Right ventricle myocardium inferior (tissue), 1 donor: ENCODE measurements at regions of chr11 and their contacts with region 1.

Region 1: GRCh38 chr11:108467091-108467823 is at the start of gene C11orf65:
- DNase-seq: peak; percentile 98
- ATAC-seq: peak; percentile 100
- total RNA-seq, gene C11orf65: 0.43 TPM

Region 2: GRCh38 chr11:108121274-108122155 is 345.7 kb before region 1 on chr11 and contains the start of gene ACAT1:
- intact Hi-C with region 1: loop called (anchors 5 kb)
- DNase-seq: peak; percentile 100
- ATAC-seq: peak; percentile 95
- total RNA-seq, gene ACAT1: 396 TPM

Region 3: DNA sequence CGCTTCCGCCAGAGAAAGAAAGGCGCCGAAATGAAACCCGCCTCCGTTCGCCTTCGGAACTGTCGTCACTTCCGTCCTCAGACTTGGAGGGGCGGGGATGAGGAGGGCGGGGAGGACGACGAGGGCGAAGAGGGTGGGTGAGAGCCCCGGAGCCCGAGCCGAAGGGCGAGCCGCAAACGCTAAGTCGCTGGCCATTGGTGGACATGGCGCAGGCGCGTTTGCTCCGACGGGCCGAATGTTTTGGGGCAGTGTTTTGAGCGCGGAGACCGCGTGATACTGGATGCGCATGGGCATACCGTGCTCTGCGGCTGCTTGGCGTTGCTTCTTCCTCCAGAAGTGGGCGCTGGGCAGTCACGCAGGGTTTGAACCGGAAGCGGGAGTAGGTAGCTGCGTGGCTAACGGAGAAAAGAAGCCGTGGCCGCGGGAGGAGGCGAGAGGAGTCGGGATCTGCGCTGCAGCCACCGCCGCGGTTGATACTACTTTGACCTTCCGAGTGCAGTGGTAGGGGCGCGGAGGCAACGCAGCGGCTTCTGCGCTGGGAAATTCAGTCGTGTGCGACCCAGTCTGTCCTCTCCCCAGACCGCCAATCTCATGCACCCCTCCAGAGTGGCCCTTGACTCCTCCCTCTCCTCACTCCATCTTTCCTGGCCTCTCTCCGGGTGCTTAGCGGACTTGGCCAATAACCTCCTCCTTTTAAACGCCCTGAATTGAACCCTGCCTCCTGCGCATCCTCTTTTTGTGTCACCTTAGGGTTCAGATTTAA is 244.4 kb before region 1 on chr11 and contains the start of gene ATM:
- intact Hi-C with region 1: loop called (anchors 2 kb)
- DNase-seq: peak; percentile 100
- ATAC-seq: peak; percentile 98
- total RNA-seq, gene ATM: 24.9 TPM

Region 4: GRCh38 chr11:108497317-108498045 is 30.2 kb after region 1 on chr11:
- intact Hi-C with region 1: loop called (anchors 1 kb)
- DNase-seq: peak; percentile 89
- ATAC-seq: peak; percentile 95

Region 5: GRCh38 chr11:108593214-108593922 is 126.1 kb after region 1 on chr11 and contains the start of gene EXPH5:
- intact Hi-C with region 1: loop called (anchors 5 kb)
- DNase-seq: peak; percentile 86
- ATAC-seq: peak; percentile 99
- total RNA-seq, gene EXPH5: 2.2 TPM